Naive thymus-derived CD4-positive, alpha-beta T cell (primary cell): ENCODE measurements at regions of chr6 and their contacts with region 1.

Region 1: GRCh38 chr6:95917034-95917433 is 98.7 kb upstream of the FUT9 start:
- DNase-seq: no peak
- ATAC-seq: no peak
- H3K4me3 ChIP-seq: no peak overlapping the region
- H3K4me3 Mint-ChIP-seq: no peak overlapping the region
- H3K27ac ChIP-seq: no peak overlapping the region
- H3K27ac Mint-ChIP-seq: no peak overlapping the region
- H3K4me1 ChIP-seq: no peaks in the 10 kb centered on the region
- H3K4me1 Mint-ChIP-seq: no peaks in the 10 kb centered on the region
- H3K27me3 ChIP-seq: no peaks in the 10 kb centered on the region
- H3K27me3 Mint-ChIP-seq: no peaks in the 10 kb centered on the region

Region 2: DNA sequence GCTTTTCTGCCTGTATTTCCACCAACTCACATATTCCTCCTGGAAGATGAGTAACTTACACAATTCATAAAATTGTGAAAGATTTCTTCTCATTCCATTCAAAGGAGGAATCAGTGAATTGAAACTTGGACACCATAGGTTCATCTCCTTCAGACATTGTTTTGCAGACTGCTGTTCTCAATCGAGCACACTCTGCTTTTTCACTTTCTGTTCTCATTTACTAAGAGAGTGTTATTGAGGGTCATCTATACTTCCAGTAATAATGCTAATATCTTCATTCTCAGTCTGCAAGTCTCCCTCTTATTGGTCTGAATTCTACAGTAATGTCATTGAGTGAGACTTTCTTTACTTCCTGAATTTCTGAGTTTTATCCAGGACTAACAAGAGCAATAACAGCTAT is 31.3 kb after region 1 on chr6:
- CTCF ChIA-PET with region 1: no interaction called
- POLR2A ChIA-PET with region 1: no interaction called
- intact Hi-C with region 1: no loop called
- DNase-seq: no peak
- ATAC-seq: no peak
- H3K4me3 ChIP-seq: no peak overlapping the region
- H3K4me3 Mint-ChIP-seq: no peak overlapping the region
- H3K27ac ChIP-seq: no peak overlapping the region
- H3K27ac Mint-ChIP-seq: no peak overlapping the region
- H3K4me1 ChIP-seq: no peaks in the 10 kb centered on the region
- H3K4me1 Mint-ChIP-seq: no peaks in the 10 kb centered on the region
- H3K27me3 ChIP-seq: no peaks in the 10 kb centered on the region
- H3K27me3 Mint-ChIP-seq: no peaks in the 10 kb centered on the region

Region 3: DNA sequence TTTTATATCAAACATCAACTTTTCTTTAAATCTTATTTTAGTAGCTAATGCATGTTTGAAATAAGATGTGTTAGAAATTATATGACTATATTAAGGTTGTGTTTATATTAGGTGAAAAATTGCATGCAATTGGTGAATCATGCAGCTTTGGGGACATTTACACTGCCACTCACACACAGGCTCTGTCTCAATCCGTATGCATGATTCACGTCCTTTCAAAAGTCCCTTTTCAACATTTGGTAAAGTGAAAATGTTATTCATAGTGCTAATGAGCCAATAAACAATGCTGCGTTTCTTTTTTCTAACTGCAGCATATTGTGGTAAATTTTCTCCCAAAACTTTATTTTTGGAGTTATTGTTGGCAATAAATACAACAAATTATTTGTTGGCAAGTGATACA is 296.8 kb after region 1 on chr6:
- CTCF ChIA-PET with region 1: no interaction called
- POLR2A ChIA-PET with region 1: no interaction called
- intact Hi-C with region 1: loop called in 1 of 2 experiments (anchors 10 kb)
- DNase-seq: no peak
- ATAC-seq: no peak
- H3K4me3 ChIP-seq: no peak overlapping the region
- H3K4me3 Mint-ChIP-seq: no peak overlapping the region
- H3K27ac ChIP-seq: no peak overlapping the region
- H3K27ac Mint-ChIP-seq: no peak overlapping the region
- H3K4me1 ChIP-seq: no peaks in the 10 kb centered on the region
- H3K4me1 Mint-ChIP-seq: no peaks in the 10 kb centered on the region
- H3K27me3 ChIP-seq: no peaks in the 10 kb centered on the region
- H3K27me3 Mint-ChIP-seq: no peaks in the 10 kb centered on the region